Activated CD4-positive, alpha-beta memory T cell treated with anti-CD3 and anti-CD28 coated beads, Interleukin-2, amount 10 ng/mL, durations not matched to agents 7 days and 5 days (primary cell): ENCODE measurements at regions of chr11 and their contacts with region 1.

Region 1: DNA sequence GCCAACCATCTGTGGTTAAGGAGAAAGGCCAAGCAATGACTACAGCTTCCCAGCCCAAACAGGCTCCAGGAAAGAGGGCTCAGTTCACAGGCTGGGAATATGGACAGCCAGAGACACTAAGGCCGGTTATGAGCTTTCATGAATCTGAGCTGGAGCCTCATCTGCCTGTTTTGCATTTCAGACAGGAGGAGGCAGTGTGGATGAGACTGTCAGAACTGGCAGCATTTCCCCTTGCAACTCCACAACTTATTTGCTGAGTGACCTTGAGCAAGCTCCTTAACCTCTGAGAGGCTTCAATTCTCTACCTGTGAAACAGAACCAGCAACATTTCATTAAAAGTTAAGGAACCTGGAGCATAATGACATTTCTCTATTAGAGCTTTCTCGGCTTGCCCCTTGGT is 264.0 kb downstream of the ETS1 start:
- DNase-seq: peak; percentile 65
- H3K4me3 Mint-ChIP-seq: no peak overlapping the region
- H3K27ac Mint-ChIP-seq: peak overlapping the region; percentile 98
- H3K4me1 Mint-ChIP-seq: peaks cover 91% of the 10 kb centered on the region
- H3K27me3 Mint-ChIP-seq: no peaks in the 10 kb centered on the region

Region 2: DNA sequence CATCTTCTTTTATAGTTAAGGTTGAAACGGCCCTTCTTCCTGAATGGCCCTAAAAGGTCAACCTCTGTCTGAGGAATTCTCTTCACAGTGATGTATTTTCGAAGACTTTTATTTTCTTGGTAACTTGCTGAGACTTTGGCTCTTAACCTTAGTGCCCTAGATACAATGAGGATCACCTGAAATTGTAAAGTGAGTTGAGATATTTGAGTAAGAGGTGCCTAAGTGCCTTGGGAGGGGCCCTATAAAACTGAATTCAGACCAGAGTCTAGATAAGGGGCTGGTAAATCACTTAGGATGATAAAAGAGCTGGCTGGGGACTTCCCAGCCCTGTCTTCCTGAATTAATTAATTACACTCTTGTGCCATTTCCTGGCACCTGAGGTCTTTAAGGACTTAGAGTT is 817.3 kb before region 1 on chr11:
- CTCF ChIA-PET with region 1: no interaction called
- POLR2A ChIA-PET with region 1: no interaction called
- DNase-seq: no peak
- H3K4me3 Mint-ChIP-seq: no peak overlapping the region
- H3K27ac Mint-ChIP-seq: no peak overlapping the region
- H3K4me1 Mint-ChIP-seq: no peaks in the 10 kb centered on the region
- H3K27me3 Mint-ChIP-seq: no peaks in the 10 kb centered on the region

Region 3: GRCh38 chr11:128246364-128246801 is 77.0 kb before region 1 on chr11:
- CTCF ChIA-PET with region 1: no interaction called
- POLR2A ChIA-PET with region 1: no interaction called
- DNase-seq: no peak
- H3K4me3 Mint-ChIP-seq: no peak overlapping the region
- H3K27ac Mint-ChIP-seq: no peak overlapping the region
- H3K4me1 Mint-ChIP-seq: no peaks in the 10 kb centered on the region
- H3K27me3 Mint-ChIP-seq: peaks cover 6% of the 10 kb centered on the region

Region 4: GRCh38 chr11:128302425-128303186 is 20.8 kb before region 1 on chr11:
- CTCF ChIA-PET with region 1: interaction called, 64 read pairs
- POLR2A ChIA-PET with region 1: interaction called, 109 read pairs
- DNase-seq: peak; percentile 84
- H3K4me3 Mint-ChIP-seq: peak overlapping the region; percentile 84
- H3K27ac Mint-ChIP-seq: peak overlapping the region; percentile 87
- H3K4me1 Mint-ChIP-seq: peaks cover 72% of the 10 kb centered on the region
- H3K27me3 Mint-ChIP-seq: no peaks in the 10 kb centered on the region

Region 5: DNA sequence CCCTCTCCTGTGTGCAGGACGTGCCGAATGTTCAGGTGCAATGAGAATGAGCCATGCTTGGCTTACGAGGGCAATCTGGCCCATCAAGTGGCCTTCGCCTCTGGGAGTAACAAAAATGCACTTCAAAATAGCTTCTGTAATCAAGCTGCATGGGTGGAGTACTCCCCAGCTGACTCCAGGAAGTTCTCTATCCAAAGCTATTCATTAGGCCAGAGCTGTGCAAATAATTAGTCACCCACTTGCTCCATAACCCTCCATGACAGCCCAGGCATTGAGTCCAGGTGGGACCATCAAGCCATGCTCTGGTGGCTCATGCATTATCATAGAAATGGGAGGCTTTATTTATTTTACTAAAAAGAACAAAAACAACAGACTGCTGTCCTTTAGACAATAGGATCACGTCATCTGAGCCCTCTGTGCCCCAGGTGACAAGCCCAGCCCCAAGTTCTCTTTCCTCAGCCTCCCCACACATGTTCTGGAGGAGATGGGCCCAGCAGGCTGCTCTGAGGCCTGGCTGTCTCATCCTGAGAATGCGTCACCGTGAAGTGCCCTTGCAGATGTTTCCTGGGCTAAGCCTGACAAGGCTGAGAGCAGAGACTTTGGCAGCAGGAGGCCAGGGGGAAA is 19.2 kb after region 1 on chr11:
- CTCF ChIA-PET with region 1: interaction called, 35 read pairs
- POLR2A ChIA-PET with region 1: interaction called, 146 read pairs
- DNase-seq: peak; percentile 79
- H3K4me3 Mint-ChIP-seq: peak overlapping the region; percentile 65
- H3K27ac Mint-ChIP-seq: peak overlapping the region; percentile 96
- H3K4me1 Mint-ChIP-seq: peaks cover 79% of the 10 kb centered on the region
- H3K27me3 Mint-ChIP-seq: no peaks in the 10 kb centered on the region

Region 6: GRCh38 chr11:128463371-128463829 is 140.0 kb after region 1 on chr11:
- CTCF ChIA-PET with region 1: interaction called, 20 read pairs
- POLR2A ChIA-PET with region 1: interaction called, 24 read pairs
- DNase-seq: no peak
- H3K4me3 Mint-ChIP-seq: peak overlapping the region; percentile 9
- H3K27ac Mint-ChIP-seq: peak overlapping the region; percentile 80
- H3K4me1 Mint-ChIP-seq: peaks cover 86% of the 10 kb centered on the region
- H3K27me3 Mint-ChIP-seq: no peaks in the 10 kb centered on the region

Region 7: DNA sequence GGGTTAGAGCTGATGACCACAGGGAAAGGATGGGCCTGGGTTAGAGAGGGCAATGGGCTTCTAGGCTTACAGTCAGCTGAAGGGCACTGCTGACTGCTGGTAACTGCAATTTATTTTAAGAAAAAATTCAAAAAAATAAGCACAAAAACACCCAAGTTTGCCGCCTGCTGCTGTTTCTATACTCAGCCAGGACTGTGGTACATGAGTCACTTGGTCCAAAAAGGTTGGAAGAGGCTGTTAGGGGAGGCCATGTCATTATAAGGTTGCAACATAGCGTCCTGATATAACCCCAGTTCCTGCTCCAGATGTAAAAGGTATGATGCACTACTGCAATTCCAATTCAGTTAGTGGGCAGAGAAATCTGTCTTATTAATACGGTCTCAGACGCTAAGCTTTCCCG is 165.1 kb after region 1 on chr11:
- CTCF ChIA-PET with region 1: interaction called, 4 read pairs
- POLR2A ChIA-PET with region 1: interaction called, 24 read pairs
- DNase-seq: no peak
- H3K4me3 Mint-ChIP-seq: peak overlapping the region; percentile 29
- H3K27ac Mint-ChIP-seq: peak overlapping the region; percentile 87
- H3K4me1 Mint-ChIP-seq: peaks cover 95% of the 10 kb centered on the region
- H3K27me3 Mint-ChIP-seq: no peaks in the 10 kb centered on the region

Region 8: GRCh38 chr11:128522055-128522942 is 198.9 kb after region 1 on chr11:
- CTCF ChIA-PET with region 1: interaction called, 5 read pairs
- POLR2A ChIA-PET with region 1: interaction called, 59 read pairs
- DNase-seq: peak; percentile 94
- H3K4me3 Mint-ChIP-seq: peak overlapping the region; percentile 97
- H3K27ac Mint-ChIP-seq: peak overlapping the region; percentile 88
- H3K4me1 Mint-ChIP-seq: peaks cover 44% of the 10 kb centered on the region
- H3K27me3 Mint-ChIP-seq: no peaks in the 10 kb centered on the region